WTC11 (cell line): ENCODE measurements at regions of chr11 and their contacts with region 1.

Region 1: GRCh38 chr11:63671322-63672155 is at the start of gene ATL3:
- DNase-seq: peak; percentile 99
- ATAC-seq: peak; percentile 97
- H3K4me3 Mint-ChIP-seq: peak within 1 kb of the TSS; percentile 68
- H3K27ac Mint-ChIP-seq: peak within 1 kb of the TSS; percentile 60
- H3K4me1 Mint-ChIP-seq: peaks cover 22% of the 10 kb centered on the region
- H3K27me3 Mint-ChIP-seq: peaks cover 18% of the 10 kb centered on the region
- CTCF ChIP-seq: no peak
- total RNA-seq, gene ATL3: 28.8 to 32.8 TPM (median 32.1 TPM) in 3 replicates

Region 2: GRCh38 chr11:63738720-63739360 is 67.3 kb after region 1 on chr11:
- CTCF ChIA-PET with region 1: interaction called, 11 read pairs
- POLR2A ChIA-PET with region 1: no interaction called
- DNase-seq: peak; percentile 81
- ATAC-seq: peak; percentile 60
- H3K4me3 Mint-ChIP-seq: no peak overlapping the region
- H3K27ac Mint-ChIP-seq: peak overlapping the region; percentile 92
- H3K4me1 Mint-ChIP-seq: peaks cover 6% of the 10 kb centered on the region
- H3K27me3 Mint-ChIP-seq: no peaks in the 10 kb centered on the region
- CTCF ChIP-seq: peak; percentile 92